ENCODE measurements at regions of chr5 and their contacts with region 1.

Region 1: GRCh38 chr5:57221049-57221568 is 47.2 kb downstream of the GPBP1 start:
- DNase-seq: no peak
- ATAC-seq: peak; percentile 86
- H3K4me3 Mint-ChIP-seq: no peak overlapping the region
- H3K27ac Mint-ChIP-seq: no peak overlapping the region
- H3K4me1 Mint-ChIP-seq: peaks cover 34% of the 10 kb centered on the region
- H3K27me3 Mint-ChIP-seq: no peaks in the 10 kb centered on the region
- CTCF ChIP-seq: peak; percentile 22

Region 2: GRCh38 chr5:56264417-56265025 is 956.6 kb before region 1 on chr5:
- CTCF ChIA-PET with region 1: interaction called, 7 read pairs
- POLR2A ChIA-PET with region 1: no interaction called
- intact Hi-C with region 1: loop called (anchors 1 kb)
- DNase-seq: no peak
- ATAC-seq: peak; percentile 60
- H3K4me3 Mint-ChIP-seq: no peak overlapping the region
- H3K27ac Mint-ChIP-seq: no peak overlapping the region
- H3K4me1 Mint-ChIP-seq: peaks cover 2% of the 10 kb centered on the region
- H3K27me3 Mint-ChIP-seq: no peaks in the 10 kb centered on the region
- CTCF ChIP-seq: no peak

Region 3: DNA sequence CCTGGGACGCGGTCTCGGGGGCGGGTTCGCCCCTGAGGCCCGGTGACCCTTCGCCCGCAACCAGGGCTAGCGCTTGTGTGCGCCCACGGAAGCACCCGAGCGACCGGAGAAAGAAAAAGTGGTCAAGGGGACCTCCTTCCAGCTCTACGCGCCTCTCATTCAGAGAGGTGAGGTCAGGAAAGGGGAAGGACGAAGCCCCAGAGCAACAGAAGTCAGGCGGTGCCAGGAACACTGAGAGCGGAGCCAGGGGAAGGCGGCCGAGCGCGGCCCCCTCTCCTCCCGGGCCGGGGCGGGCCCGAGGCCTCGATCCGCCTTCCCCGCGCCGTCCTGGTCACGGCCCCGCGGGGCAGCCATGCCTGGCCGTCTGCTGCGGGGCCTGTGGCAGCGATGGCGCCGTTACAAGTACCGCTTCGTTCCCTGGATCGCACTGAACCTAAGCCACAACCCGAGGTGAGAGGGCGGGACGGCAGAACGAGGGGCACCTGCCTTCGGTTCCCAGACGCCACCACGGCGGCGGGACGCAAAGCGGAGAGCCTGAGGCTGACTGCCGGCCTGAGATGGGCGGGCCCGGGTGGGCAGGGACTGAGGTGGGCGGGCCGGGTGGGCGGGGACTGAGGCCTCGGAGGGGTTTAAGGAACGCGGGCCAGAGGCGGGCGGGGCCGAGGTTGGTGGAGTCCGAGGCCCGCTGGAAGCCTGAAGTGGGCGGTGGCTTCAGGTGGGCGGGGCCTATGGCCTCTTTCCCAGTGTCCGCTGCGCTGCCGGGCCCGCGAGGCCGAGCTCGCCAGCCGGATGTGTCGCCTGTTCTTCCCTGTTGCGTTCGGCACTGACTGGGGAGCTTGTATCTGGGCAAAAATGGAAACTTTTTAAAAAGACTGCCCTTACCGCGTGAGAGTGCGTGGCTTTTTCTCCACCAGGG is 311.6 kb before region 1 on chr5 and contains the start of gene SETD9:
- CTCF ChIA-PET with region 1: interaction called, 3 read pairs
- POLR2A ChIA-PET with region 1: interaction called, 4 read pairs
- intact Hi-C with region 1: loop called (anchors 2 kb)
- DNase-seq: peak; percentile 93
- ATAC-seq: peak; percentile 85
- H3K4me3 Mint-ChIP-seq: peak within 1 kb of the TSS; percentile 96
- H3K27ac Mint-ChIP-seq: peak within 1 kb of the TSS; percentile 96
- H3K4me1 Mint-ChIP-seq: peaks cover 20% of the 10 kb centered on the region
- H3K27me3 Mint-ChIP-seq: no peaks in the 10 kb centered on the region
- CTCF ChIP-seq: no peak
- total RNA-seq, gene SETD9: 3.4 and 6.2 TPM in 2 replicates

Region 4: GRCh38 chr5:56993241-56993640 is 227.9 kb before region 1 on chr5:
- CTCF ChIA-PET with region 1: interaction called, 7 read pairs
- POLR2A ChIA-PET with region 1: no interaction called
- intact Hi-C with region 1: loop called (anchors 1 kb)
- DNase-seq: no peak
- ATAC-seq: no peak
- H3K4me3 Mint-ChIP-seq: no peak overlapping the region
- H3K27ac Mint-ChIP-seq: no peak overlapping the region
- H3K4me1 Mint-ChIP-seq: no peaks in the 10 kb centered on the region
- H3K27me3 Mint-ChIP-seq: no peaks in the 10 kb centered on the region
- CTCF ChIP-seq: no peak

Region 5: GRCh38 chr5:57209351-57210040 is 11.6 kb before region 1 on chr5:
- CTCF ChIA-PET with region 1: interaction called, 3 read pairs
- POLR2A ChIA-PET with region 1: interaction called, 3 read pairs
- intact Hi-C with region 1: loop called (anchors 1 kb)
- DNase-seq: no peak
- ATAC-seq: no peak
- H3K4me3 Mint-ChIP-seq: no peak overlapping the region
- H3K27ac Mint-ChIP-seq: peak overlapping the region; percentile 25
- H3K4me1 Mint-ChIP-seq: peaks cover 66% of the 10 kb centered on the region
- H3K27me3 Mint-ChIP-seq: no peaks in the 10 kb centered on the region
- CTCF ChIP-seq: no peak

Measured in activated B cell treated with CpG ODN at 0.5 μM for 24 hours (primary cell).